Activated naive CD4-positive, alpha-beta T cell treated with anti-CD3 and anti-CD28 coated beads for 36 hours (primary cell): ENCODE measurements at regions of chr13 and their contacts with region 1.

Region 1: GRCh38 chr13:77026818-77027585 is at the start of gene FBXL3:
- DNase-seq: peak; percentile 83
- H3K4me3 Mint-ChIP-seq: peak within 1 kb of the TSS; percentile 91
- H3K27ac Mint-ChIP-seq: peak within 1 kb of the TSS; percentile 93
- H3K4me1 Mint-ChIP-seq: peaks cover 42% of the 10 kb centered on the region
- H3K27me3 Mint-ChIP-seq: no peaks in the 10 kb centered on the region
- total RNA-seq, gene FBXL3: 27.1 to 27.4 TPM

Region 2: DNA sequence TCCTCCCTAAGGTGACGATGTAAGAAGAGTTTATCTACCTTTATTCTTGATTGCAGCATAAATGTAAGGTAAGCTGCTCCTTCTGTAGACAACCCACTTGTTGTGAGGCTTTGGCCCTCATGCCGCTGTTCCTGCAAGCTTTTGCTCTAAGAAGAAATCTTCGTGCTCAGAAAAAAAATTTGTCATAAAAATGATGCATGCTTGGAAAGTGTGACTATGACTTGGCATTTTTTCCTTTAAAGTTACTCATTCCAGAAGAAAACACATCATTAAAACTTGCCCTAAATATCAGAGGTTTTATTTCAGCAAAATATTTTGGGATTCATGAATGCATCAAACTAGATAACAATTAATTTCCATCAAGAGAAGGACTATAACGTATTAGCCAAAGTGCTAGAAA is 180.6 kb before region 1 on chr13:
- CTCF ChIA-PET with region 1: no interaction called
- intact Hi-C with region 1: no loop called
- DNase-seq: no peak
- H3K4me3 Mint-ChIP-seq: no peak overlapping the region
- H3K27ac Mint-ChIP-seq: no peak overlapping the region
- H3K4me1 Mint-ChIP-seq: no peaks in the 10 kb centered on the region
- H3K27me3 Mint-ChIP-seq: peaks cover 3% of the 10 kb centered on the region

Region 3: GRCh38 chr13:76991796-76992547 is 35.0 kb before region 1 on chr13 and contains the start of gene CLN5:
- CTCF ChIA-PET with region 1: interaction called, 4 read pairs
- intact Hi-C with region 1: loop called (anchors 1 kb)
- DNase-seq: peak; percentile 95
- H3K4me3 Mint-ChIP-seq: peak within 1 kb of the TSS; percentile 95
- H3K27ac Mint-ChIP-seq: peak within 1 kb of the TSS; percentile 97
- H3K4me1 Mint-ChIP-seq: peaks cover 39% of the 10 kb centered on the region
- H3K27me3 Mint-ChIP-seq: no peaks in the 10 kb centered on the region
- total RNA-seq, gene CLN5: 13.6 to 14.6 TPM

Region 4: DNA sequence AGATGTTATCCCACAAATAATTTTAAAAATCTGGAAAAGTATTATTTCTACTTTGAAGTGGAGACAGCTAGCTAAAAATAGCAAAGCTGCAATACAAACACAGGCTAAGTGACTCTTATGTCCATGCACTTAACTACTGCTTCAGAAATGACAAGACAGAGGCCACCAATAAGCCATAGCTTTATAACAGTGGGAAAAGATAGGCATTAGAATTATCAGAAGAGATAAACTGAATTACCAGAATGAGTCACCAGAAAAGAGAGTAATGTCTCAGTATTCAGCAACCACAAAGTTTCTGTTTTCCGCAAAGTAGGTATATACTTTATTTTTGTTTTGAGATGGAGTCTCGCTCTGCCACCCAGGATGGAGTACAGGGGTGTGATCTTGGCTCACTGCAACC is 18.0 kb before region 1 on chr13:
- CTCF ChIA-PET with region 1: interaction called, 5 read pairs
- intact Hi-C with region 1: loop called (anchors 1 kb)
- DNase-seq: peak; percentile 16
- H3K4me3 Mint-ChIP-seq: no peak overlapping the region
- H3K27ac Mint-ChIP-seq: peak overlapping the region; percentile 61
- H3K4me1 Mint-ChIP-seq: peaks cover 43% of the 10 kb centered on the region
- H3K27me3 Mint-ChIP-seq: no peaks in the 10 kb centered on the region

Region 5: DNA sequence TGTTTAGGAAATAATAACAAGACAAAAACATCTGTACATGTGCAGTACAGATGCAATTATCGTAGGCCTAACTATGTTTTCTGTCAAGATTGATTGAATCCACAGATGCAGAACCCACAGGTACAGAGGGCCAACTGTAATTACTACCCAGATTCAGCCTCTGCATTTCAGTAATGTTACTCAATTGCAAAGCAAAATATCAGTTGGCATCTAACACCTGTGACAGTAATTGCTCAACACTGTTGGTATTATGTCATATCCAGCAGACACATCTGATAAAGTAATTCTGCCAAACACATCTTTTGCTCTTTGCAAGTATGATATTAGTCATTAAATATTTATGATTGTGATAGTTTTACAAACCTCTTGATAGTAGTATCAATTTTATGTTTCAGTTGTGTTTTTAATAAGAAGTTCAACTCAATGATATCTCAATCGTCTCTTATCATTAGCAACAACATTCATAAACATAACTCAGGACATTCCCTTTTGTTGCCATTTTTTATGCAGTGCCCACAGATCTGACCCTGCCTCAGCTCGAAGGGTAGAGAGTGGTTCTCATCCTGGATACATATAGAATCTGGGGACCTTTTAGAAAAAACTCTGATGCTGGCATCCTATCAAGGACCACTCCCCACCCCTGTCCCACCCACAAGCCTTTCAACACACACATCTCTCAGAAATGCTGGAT is 195.1 kb after region 1 on chr13:
- CTCF ChIA-PET with region 1: no interaction called
- intact Hi-C with region 1: no loop called
- DNase-seq: no peak
- H3K4me3 Mint-ChIP-seq: no peak overlapping the region
- H3K27ac Mint-ChIP-seq: no peak overlapping the region
- H3K4me1 Mint-ChIP-seq: peaks cover 26% of the 10 kb centered on the region
- H3K27me3 Mint-ChIP-seq: no peaks in the 10 kb centered on the region

Region 6: GRCh38 chr13:77300176-77301037 is 273.4 kb after region 1 on chr13:
- CTCF ChIA-PET with region 1: no interaction called
- intact Hi-C with region 1: no loop called
- DNase-seq: no peak
- H3K4me3 Mint-ChIP-seq: no peak overlapping the region
- H3K27ac Mint-ChIP-seq: no peak overlapping the region
- H3K4me1 Mint-ChIP-seq: peaks cover 60% of the 10 kb centered on the region
- H3K27me3 Mint-ChIP-seq: no peaks in the 10 kb centered on the region

Region 7: GRCh38 chr13:77555246-77555645 is 528.2 kb after region 1 on chr13:
- CTCF ChIA-PET with region 1: no interaction called
- intact Hi-C with region 1: loop called (anchors 5 kb)
- DNase-seq: no peak
- H3K4me3 Mint-ChIP-seq: no peak overlapping the region
- H3K27ac Mint-ChIP-seq: no peak overlapping the region
- H3K4me1 Mint-ChIP-seq: peaks cover 20% of the 10 kb centered on the region
- H3K27me3 Mint-ChIP-seq: peaks cover 3% of the 10 kb centered on the region

Region 8: DNA sequence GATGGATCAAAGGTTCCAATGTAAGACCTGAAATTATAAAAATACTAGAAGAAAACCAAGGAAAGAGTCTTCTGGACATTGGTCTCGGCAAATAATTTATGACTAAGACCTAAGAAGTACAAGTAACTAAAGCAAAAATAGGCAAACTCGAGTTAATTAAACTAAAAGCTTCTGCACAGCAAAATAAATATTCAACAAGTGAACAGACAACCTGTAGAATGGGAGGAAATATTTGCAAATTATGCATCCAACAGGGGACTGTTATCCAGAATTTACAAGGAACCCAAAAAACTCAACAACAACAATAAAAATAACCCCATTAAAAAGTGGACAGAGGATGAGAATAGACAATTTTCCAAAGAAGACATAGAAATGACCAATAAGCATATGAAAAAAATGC is 660.8 kb after region 1 on chr13:
- CTCF ChIA-PET with region 1: no interaction called
- intact Hi-C with region 1: no loop called
- DNase-seq: no peak
- H3K4me3 Mint-ChIP-seq: no peak overlapping the region
- H3K27ac Mint-ChIP-seq: no peak overlapping the region
- H3K4me1 Mint-ChIP-seq: no peaks in the 10 kb centered on the region
- H3K27me3 Mint-ChIP-seq: no peaks in the 10 kb centered on the region

Region 9: GRCh38 chr13:78603240-78603957 is 1576.4 kb after region 1 on chr13 and contains the start of gene POU4F1:
- CTCF ChIA-PET with region 1: no interaction called
- intact Hi-C with region 1: loop called (anchors 10 kb)
- DNase-seq: peak; percentile 84
- H3K4me3 Mint-ChIP-seq: peak within 1 kb of the TSS; percentile 73
- H3K27ac Mint-ChIP-seq: no peak within 1 kb of the TSS
- H3K4me1 Mint-ChIP-seq: peaks cover 42% of the 10 kb centered on the region
- H3K27me3 Mint-ChIP-seq: peaks cover 81% of the 10 kb centered on the region
- total RNA-seq, gene POU4F1: 0.07 TPM in 1 of 2 experiments, not detected in the other